ENCODE measurements at regions of chr21 and their contacts with region 1.

Region 1: DNA sequence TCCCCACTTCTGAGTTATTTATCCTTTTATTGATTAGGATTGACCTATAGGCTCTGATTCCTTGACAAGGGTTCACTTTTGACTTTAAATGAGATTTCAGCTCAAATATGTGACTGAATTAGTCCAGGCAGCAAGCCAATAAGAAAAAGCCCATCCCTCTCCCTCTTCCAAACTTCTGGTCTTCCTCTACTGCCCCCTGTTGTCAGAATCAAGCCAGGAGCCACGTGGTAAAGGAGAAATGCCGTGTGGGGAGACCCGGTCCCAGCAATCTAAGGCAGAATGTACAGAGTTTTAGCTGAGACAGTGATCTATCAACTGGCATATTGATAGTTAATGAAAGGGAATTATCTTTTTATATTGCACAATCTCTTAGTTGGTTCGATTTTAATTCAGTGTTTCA is 5.2 kb downstream of the ADAMTS5 start:
- DNase-seq: peak; percentile 62
- ATAC-seq: peak; percentile 7
- H3K4me3 Mint-ChIP-seq: no peak overlapping the region
- H3K27ac Mint-ChIP-seq: no peak overlapping the region
- H3K4me1 Mint-ChIP-seq: peaks cover 29% of the 10 kb centered on the region
- H3K27me3 Mint-ChIP-seq: peaks cover 24% of the 10 kb centered on the region
- CTCF ChIP-seq: peak; percentile 57

Region 2: DNA sequence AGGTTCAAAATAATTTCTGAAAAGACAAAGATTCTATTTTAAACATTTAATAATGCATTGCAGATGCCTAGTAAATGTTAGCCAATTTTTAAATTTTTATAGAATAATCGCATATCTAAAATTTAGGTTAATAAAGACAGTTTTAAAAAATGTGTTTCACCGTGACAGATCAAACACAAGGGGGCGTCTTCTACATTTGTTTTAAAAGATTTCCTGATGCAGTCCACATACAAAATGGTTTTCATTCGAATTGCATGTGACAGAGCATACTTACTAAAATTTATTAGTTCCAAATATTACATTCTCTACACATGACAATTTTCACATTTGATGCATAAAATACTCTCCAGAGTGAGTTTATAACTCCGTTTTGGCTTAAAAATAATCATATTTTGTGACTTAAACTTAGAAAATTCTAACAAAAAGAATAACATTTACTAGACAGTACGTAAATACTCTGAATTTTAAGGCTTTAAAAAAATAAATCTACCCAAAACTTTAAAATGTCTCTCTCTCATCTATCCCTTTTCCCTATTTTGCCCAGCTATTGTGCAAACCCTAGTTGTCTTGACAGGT is 192.0 kb before region 1 on chr21:
- CTCF ChIA-PET with region 1: no interaction called
- POLR2A ChIA-PET with region 1: no interaction called
- DNase-seq: no peak
- ATAC-seq: no peak
- H3K4me3 Mint-ChIP-seq: no peak overlapping the region
- H3K27ac Mint-ChIP-seq: no peak overlapping the region
- H3K4me1 Mint-ChIP-seq: peaks cover 3% of the 10 kb centered on the region; the same call in 1 of the 2 replicates
- H3K27me3 Mint-ChIP-seq: no peaks in the 10 kb centered on the region
- CTCF ChIP-seq: peak; percentile 14; the same call in 1 of the 2 replicates

Region 3: GRCh38 chr21:26845066-26845758 is 116.5 kb before region 1 on chr21 and contains the start of gene ADAMTS1:
- CTCF ChIA-PET with region 1: interaction called, 12 read pairs
- POLR2A ChIA-PET with region 1: interaction called, 6 read pairs
- DNase-seq: peak; percentile 88
- ATAC-seq: peak; percentile 69
- H3K4me3 Mint-ChIP-seq: peak within 1 kb of the TSS; percentile 89
- H3K27ac Mint-ChIP-seq: peak within 1 kb of the TSS; percentile 90
- H3K4me1 Mint-ChIP-seq: peaks cover 33% of the 10 kb centered on the region
- H3K27me3 Mint-ChIP-seq: peaks cover 7% of the 10 kb centered on the region
- CTCF ChIP-seq: no peak
- total RNA-seq, gene ADAMTS1: 16.9 to 35.6 TPM (median 20.4 TPM) in 3 replicates

Region 4: DNA sequence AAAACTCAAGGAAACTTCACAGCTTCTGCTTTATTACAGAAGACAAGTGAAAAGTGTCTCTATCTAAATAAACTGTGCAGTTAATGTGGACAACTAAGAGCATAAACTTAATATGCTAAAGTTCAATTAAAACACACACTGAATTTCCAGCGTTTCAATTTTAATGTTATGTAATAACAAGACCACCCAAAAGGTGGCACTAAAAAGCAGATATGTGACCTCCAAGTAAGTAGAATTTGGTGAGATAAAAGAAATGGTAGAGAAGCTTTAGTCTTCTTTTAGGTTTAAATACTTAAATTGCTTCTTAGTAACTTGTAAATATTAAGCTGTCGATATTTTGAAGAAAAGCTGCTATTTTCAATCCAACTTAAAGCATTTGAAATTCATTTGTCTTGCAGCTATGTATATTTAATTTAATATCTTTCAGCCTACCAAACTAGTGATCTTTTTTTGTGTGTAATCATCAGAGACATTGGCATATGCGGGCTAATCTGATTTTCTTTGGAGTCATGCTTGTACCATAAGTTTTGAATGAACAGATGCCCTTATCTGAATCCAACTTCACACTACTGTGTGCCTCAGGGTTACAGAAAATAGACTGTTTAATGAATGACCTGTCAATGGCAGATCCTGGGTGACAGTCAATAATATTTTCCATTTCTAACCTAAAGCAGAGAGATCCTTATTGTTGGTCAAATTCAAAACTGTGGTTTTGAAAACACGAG is 80.0 kb before region 1 on chr21:
- CTCF ChIA-PET with region 1: interaction called, 27 read pairs
- POLR2A ChIA-PET with region 1: no interaction called
- DNase-seq: no peak
- ATAC-seq: no peak
- H3K4me3 Mint-ChIP-seq: no peak overlapping the region
- H3K27ac Mint-ChIP-seq: no peak overlapping the region
- H3K4me1 Mint-ChIP-seq: peaks cover 7% of the 10 kb centered on the region
- H3K27me3 Mint-ChIP-seq: no peaks in the 10 kb centered on the region
- CTCF ChIP-seq: no peak; the same call in 1 of the 2 replicates

Region 5: DNA sequence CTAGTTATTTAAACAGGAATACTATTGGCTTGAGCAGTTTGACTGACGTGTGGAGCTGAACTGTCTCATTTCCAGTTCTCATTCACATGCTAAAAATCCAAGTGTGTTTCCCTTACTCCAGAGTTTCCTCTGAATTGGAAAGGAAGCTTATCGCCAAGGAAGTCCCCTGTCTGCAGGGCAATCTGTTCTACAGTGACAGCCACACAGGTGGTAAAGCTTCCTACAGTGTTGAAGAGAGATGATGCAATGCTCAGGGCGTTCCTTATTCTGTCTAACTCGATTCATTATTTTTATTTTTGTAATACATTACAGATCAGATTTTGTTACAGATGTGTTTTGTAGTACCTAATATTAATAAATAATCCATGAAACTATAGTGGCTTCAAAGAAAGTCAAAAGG is 36.1 kb before region 1 on chr21:
- CTCF ChIA-PET with region 1: interaction called, 11 read pairs
- POLR2A ChIA-PET with region 1: no interaction called
- DNase-seq: no peak
- ATAC-seq: peak; percentile 85
- H3K4me3 Mint-ChIP-seq: no peak overlapping the region
- H3K27ac Mint-ChIP-seq: peak overlapping the region; percentile 89
- H3K4me1 Mint-ChIP-seq: peaks cover 19% of the 10 kb centered on the region
- H3K27me3 Mint-ChIP-seq: no peaks in the 10 kb centered on the region
- CTCF ChIP-seq: no peak

Region 6: GRCh38 chr21:27213303-27213702 is 251.6 kb after region 1 on chr21:
- CTCF ChIA-PET with region 1: interaction called, 12 read pairs
- POLR2A ChIA-PET with region 1: no interaction called
- DNase-seq: no peak
- ATAC-seq: peak; percentile 75; the same call in 1 of the 2 replicates
- H3K4me3 Mint-ChIP-seq: no peak overlapping the region
- H3K27ac Mint-ChIP-seq: no peak overlapping the region
- H3K4me1 Mint-ChIP-seq: no peaks in the 10 kb centered on the region
- H3K27me3 Mint-ChIP-seq: no peaks in the 10 kb centered on the region; the same call in 1 of the 2 replicates
- CTCF ChIP-seq: no peak

Measured in WTC11 (cell line).